ENCODE measurements at regions of chr13 and their contacts with region 1.

Region 1: GRCh38 chr13:95834134-95834765 is 157.3 kb downstream of the DNAJC3 start:
- DNase-seq: peak; percentile 52 to 63 (median 59)
- H3K4me3 ChIP-seq: no peak overlapping the region
- H3K4me3 Mint-ChIP-seq: no peak overlapping the region
- H3K27ac ChIP-seq: no peak overlapping the region
- H3K27ac Mint-ChIP-seq: no peak overlapping the region
- H3K4me1 ChIP-seq: no peaks in the 10 kb centered on the region
- H3K4me1 Mint-ChIP-seq: peaks cover 0 to 2% (median 0%) of the 10 kb centered on the region in 4 donors
- H3K27me3 ChIP-seq: no peaks in the 10 kb centered on the region
- H3K27me3 Mint-ChIP-seq: peaks cover 14 to 18% of the 10 kb centered on the region in 2 donors

Region 2: GRCh38 chr13:95480131-95480545 is 354.1 kb before region 1 on chr13:
- CTCF ChIA-PET with region 1: interaction called, 4 read pairs
- POLR2A ChIA-PET with region 1: no interaction called
- intact Hi-C with region 1: loop called (anchors 1 kb)
- DNase-seq: no peak
- H3K4me3 ChIP-seq: no peak overlapping the region
- H3K4me3 Mint-ChIP-seq: peak overlapping the region in 1 of 8 donors; percentile 35
- H3K27ac ChIP-seq: no peak overlapping the region
- H3K27ac Mint-ChIP-seq: no peak overlapping the region
- H3K4me1 ChIP-seq: no peaks in the 10 kb centered on the region
- H3K4me1 Mint-ChIP-seq: peaks cover 4 to 8% (median 8%) of the 10 kb centered on the region in 4 donors
- H3K27me3 ChIP-seq: no peaks in the 10 kb centered on the region
- H3K27me3 Mint-ChIP-seq: peaks cover 0 to 1% of the 10 kb centered on the region in 2 donors

Region 3: DNA sequence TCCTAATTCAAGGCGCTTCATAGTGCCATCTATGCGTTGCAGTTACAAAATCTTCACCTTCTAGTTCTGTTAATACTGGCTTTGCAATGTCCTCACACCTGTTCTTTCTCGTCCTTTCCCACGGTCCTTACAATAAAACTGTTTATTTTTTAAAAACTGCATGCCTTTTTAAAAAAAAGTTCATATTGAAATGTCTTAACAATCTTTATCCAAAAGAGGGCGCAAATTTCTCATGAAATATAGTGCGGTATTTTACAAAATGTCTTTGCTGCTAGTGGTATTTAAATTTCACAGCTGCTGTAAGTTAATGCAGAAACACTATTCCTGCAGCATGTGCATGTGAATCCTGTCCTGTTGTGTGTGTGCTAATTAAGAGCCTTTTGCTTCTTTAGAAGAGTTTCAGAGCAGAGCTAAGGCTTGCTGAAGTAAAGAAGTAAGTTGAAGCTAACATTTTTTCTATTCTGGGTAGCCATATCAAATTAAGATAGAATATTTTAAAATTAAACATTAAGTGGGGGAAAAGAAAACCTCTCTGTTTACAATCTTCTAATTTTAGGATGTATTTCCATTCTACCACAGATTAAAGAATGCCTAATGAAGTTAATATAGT is 297.5 kb before region 1 on chr13:
- CTCF ChIA-PET with region 1: interaction called, 32 read pairs
- POLR2A ChIA-PET with region 1: no interaction called
- intact Hi-C with region 1: loop called (anchors 1 kb)
- DNase-seq: no peak
- H3K4me3 ChIP-seq: no peak overlapping the region
- H3K4me3 Mint-ChIP-seq: no peak overlapping the region
- H3K27ac ChIP-seq: no peak overlapping the region
- H3K27ac Mint-ChIP-seq: no peak overlapping the region
- H3K4me1 ChIP-seq: no peaks in the 10 kb centered on the region
- H3K4me1 Mint-ChIP-seq: peaks cover 0 to 1% (median 0%) of the 10 kb centered on the region in 4 donors
- H3K27me3 ChIP-seq: no peaks in the 10 kb centered on the region
- H3K27me3 Mint-ChIP-seq: peaks cover 23 to 38% of the 10 kb centered on the region in 2 donors

Region 4: GRCh38 chr13:95624020-95624419 is 210.2 kb before region 1 on chr13:
- CTCF ChIA-PET with region 1: interaction called, 213 read pairs
- POLR2A ChIA-PET with region 1: interaction called, 3 read pairs
- intact Hi-C with region 1: loop called (anchors 1 kb)
- DNase-seq: peak in 4 of 5 donors; percentile 19 to 31 (median 20)
- H3K4me3 ChIP-seq: no peak overlapping the region
- H3K4me3 Mint-ChIP-seq: no peak overlapping the region
- H3K27ac ChIP-seq: no peak overlapping the region
- H3K27ac Mint-ChIP-seq: no peak overlapping the region
- H3K4me1 ChIP-seq: no peaks in the 10 kb centered on the region
- H3K4me1 Mint-ChIP-seq: no peaks in the 10 kb centered on the region
- H3K27me3 ChIP-seq: no peaks in the 10 kb centered on the region
- H3K27me3 Mint-ChIP-seq: peaks cover 3 to 5% of the 10 kb centered on the region in 2 donors

Region 5: GRCh38 chr13:95813139-95813538 is 21.1 kb before region 1 on chr13:
- CTCF ChIA-PET with region 1: interaction called, 23 read pairs
- POLR2A ChIA-PET with region 1: no interaction called
- intact Hi-C with region 1: no loop called
- DNase-seq: no peak
- H3K4me3 ChIP-seq: no peak overlapping the region
- H3K4me3 Mint-ChIP-seq: no peak overlapping the region
- H3K27ac ChIP-seq: no peak overlapping the region
- H3K27ac Mint-ChIP-seq: no peak overlapping the region
- H3K4me1 ChIP-seq: no peaks in the 10 kb centered on the region
- H3K4me1 Mint-ChIP-seq: no peaks in the 10 kb centered on the region
- H3K27me3 ChIP-seq: no peaks in the 10 kb centered on the region
- H3K27me3 Mint-ChIP-seq: peaks cover 11 to 20% of the 10 kb centered on the region in 2 donors

Region 6: GRCh38 chr13:95822303-95822702 is 11.9 kb before region 1 on chr13:
- CTCF ChIA-PET with region 1: interaction called, 23 read pairs
- POLR2A ChIA-PET with region 1: no interaction called
- intact Hi-C with region 1: no loop called
- DNase-seq: no peak
- H3K4me3 ChIP-seq: no peak overlapping the region
- H3K4me3 Mint-ChIP-seq: no peak overlapping the region
- H3K27ac ChIP-seq: no peak overlapping the region
- H3K27ac Mint-ChIP-seq: no peak overlapping the region
- H3K4me1 ChIP-seq: no peaks in the 10 kb centered on the region
- H3K4me1 Mint-ChIP-seq: no peaks in the 10 kb centered on the region
- H3K27me3 ChIP-seq: peaks cover 5% of the 10 kb centered on the region
- H3K27me3 Mint-ChIP-seq: peaks cover 10 to 14% of the 10 kb centered on the region in 2 donors

Region 7: DNA sequence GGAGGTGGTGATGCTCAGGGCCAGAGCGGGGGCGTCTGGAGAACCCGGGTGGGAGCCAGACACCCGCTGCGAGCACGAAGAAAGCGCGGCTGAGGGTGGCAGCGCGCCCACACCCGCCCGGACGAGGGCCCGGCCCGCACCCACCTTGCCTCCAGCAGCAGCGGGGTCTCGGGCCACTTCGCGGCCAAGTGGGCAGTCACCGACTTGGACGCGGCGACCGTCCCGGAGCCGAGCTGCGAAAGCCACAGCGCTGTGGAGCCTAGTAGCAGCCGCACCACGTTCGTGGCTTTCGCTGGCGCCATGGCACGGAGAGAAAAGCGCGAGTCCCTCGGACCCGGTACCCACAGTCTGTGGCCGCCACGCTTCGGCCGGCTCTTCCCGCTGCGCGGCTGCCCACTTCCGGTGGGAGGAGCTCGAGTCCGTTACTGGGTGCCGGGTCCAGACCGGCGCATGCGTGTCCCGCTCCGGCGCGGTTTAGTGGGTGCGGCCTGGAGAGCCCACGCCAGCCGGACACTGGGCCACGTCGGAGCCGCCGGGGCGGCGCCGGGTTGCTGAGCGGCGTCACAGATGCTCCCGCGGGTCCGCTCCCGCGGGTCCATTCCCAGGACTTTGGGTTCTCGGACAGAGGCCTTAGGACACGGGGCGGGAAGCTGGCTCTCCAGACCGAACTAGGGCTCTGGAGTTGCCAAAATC is 218.9 kb after region 1 on chr13 and contains the start of gene UGGT2:
- CTCF ChIA-PET with region 1: no interaction called
- POLR2A ChIA-PET with region 1: no interaction called
- intact Hi-C with region 1: no loop called
- DNase-seq: no peak
- H3K4me3 ChIP-seq: no peak within 1 kb of the TSS
- H3K4me3 Mint-ChIP-seq: peak within 1 kb of the TSS in 4 of 8 donors; percentile 34 to 69 (median 66)
- H3K27ac ChIP-seq: no peak within 1 kb of the TSS
- H3K27ac Mint-ChIP-seq: no peak within 1 kb of the TSS
- H3K4me1 ChIP-seq: no peaks in the 10 kb centered on the region
- H3K4me1 Mint-ChIP-seq: peaks cover 4 to 7% (median 5%) of the 10 kb centered on the region in 4 donors
- H3K27me3 ChIP-seq: no peaks in the 10 kb centered on the region
- H3K27me3 Mint-ChIP-seq: peaks cover 8 to 17% of the 10 kb centered on the region in 2 donors
- total RNA-seq, gene UGGT2: not detected

Region 8: DNA sequence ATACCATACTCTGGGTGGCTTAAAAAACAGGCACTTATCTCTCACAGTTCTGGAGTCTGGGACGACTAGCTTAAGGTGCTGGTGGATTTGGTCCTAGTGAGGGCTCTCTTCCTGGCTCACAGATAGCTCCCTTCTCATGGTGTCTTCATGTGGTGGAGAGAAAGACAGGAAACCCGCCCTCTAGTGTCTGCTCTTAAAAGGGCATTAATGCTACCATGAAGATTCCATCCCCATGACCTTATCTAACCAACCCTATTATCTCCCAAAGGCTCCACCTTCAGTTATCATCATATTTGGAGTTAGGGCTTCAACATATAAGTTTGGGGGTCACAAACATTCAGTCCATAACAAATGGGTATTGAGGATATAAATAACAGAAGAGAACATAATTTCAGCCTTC is 395.1 kb after region 1 on chr13:
- CTCF ChIA-PET with region 1: no interaction called
- POLR2A ChIA-PET with region 1: no interaction called
- intact Hi-C with region 1: no loop called
- DNase-seq: no peak
- H3K4me3 ChIP-seq: no peak overlapping the region
- H3K4me3 Mint-ChIP-seq: no peak overlapping the region
- H3K27ac ChIP-seq: no peak overlapping the region
- H3K27ac Mint-ChIP-seq: no peak overlapping the region
- H3K4me1 ChIP-seq: no peaks in the 10 kb centered on the region
- H3K4me1 Mint-ChIP-seq: no peaks in the 10 kb centered on the region
- H3K27me3 ChIP-seq: no peaks in the 10 kb centered on the region
- H3K27me3 Mint-ChIP-seq: no peaks in the 10 kb centered on the region

Measured in CD4-positive, alpha-beta memory T cell (primary cell).